ENCODE measurements at regions of chr4 and their contacts with region 1.

Region 1: GRCh38 chr4:38663801-38664705 is at the start of gene KLF3:
- DNase-seq: no peak
- ATAC-seq: peak; percentile 82
- H3K4me3 Mint-ChIP-seq: peak within 1 kb of the TSS; percentile 84
- H3K27ac Mint-ChIP-seq: peak within 1 kb of the TSS; percentile 88
- H3K4me1 Mint-ChIP-seq: peaks cover 67% of the 10 kb centered on the region
- H3K27me3 Mint-ChIP-seq: no peaks in the 10 kb centered on the region
- CTCF ChIP-seq: no peak
- total RNA-seq, gene KLF3: 14.5 and 15.9 TPM in 2 replicates

Region 2: DNA sequence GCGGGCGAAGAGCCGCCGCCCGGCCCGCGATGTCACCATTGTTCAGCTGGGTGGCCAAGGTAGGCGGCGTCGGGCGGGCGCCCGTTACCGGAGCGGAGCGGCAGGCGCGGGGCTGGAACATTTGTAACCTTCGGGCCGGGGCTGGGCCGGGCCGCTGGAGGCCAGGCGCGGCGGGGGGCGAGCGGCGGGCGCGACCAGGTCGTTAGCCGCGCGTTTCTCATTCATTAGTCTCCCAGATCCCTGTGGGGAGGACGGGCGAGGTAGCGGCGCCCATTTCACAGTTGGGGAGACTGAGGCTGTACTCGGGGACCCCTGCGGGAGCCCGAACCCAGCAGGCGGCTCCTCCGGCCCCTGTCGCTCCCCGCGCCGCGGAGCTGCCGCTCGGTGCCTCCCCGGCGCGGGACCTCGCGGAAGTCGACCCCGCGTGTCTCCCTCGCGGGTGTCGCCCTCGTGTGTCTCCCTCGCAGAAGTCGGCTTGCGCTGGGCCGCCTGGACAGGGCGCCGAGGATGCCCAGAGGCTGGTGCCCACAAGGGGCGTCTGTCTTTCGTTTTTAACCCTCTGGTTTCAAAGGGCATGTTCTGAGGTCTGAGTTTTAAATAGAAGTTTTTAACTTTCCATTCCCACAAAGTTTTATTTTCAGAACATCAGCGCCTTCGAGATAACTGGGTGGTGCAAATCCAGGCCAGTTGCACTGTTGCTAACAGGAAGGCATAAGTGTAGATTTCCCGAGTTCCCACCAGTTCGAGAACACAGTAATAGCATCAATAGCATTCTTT is 686.4 kb before region 1 on chr4:
- CTCF ChIA-PET with region 1: no interaction called
- POLR2A ChIA-PET with region 1: no interaction called
- intact Hi-C with region 1: loop called (anchors 5 kb)
- DNase-seq: peak; percentile 62
- ATAC-seq: peak; percentile 73
- H3K4me3 Mint-ChIP-seq: peak overlapping the region; percentile 86
- H3K27ac Mint-ChIP-seq: peak overlapping the region; percentile 82
- H3K4me1 Mint-ChIP-seq: peaks cover 57% of the 10 kb centered on the region
- H3K27me3 Mint-ChIP-seq: no peaks in the 10 kb centered on the region
- CTCF ChIP-seq: no peak

Region 3: DNA sequence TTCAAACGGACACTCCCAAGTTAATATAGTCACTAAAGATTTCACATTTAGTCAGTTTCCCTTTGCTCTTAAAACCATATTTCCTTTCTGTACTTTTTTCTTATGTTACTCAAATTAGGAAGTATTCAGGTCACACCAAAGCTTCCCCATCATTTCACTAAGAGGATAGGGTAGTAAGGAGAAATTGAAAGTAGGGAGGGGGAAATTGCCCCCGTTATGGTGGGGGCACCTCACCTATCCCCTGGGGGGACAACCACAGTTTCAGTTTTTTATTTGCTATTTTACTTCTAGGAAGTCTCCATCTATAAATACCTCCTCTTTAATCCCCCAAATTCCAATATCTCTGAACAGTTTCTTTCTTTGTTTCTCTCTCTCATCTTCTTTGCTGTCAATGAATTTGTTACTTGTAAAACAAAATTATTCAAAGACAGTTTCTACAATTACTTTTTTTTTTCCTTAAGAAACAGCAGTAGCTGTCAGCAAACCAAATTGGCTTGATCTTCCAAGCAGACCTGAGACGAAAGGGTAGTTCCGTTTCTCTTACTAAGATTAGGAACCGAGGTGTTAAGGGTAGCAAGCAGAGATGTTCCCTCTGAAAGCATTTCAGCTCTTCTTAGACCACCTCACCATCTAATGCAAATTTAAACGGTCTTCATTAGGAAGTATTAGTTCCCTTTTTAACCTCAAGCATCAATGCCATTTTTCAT is 160.2 kb before region 1 on chr4:
- CTCF ChIA-PET with region 1: no interaction called
- POLR2A ChIA-PET with region 1: interaction called, 5 read pairs
- intact Hi-C with region 1: loop called (anchors 2 kb)
- DNase-seq: no peak
- ATAC-seq: peak; percentile 90
- H3K4me3 Mint-ChIP-seq: peak overlapping the region; percentile 66
- H3K27ac Mint-ChIP-seq: peak overlapping the region; percentile 74
- H3K4me1 Mint-ChIP-seq: peaks cover 32% of the 10 kb centered on the region
- H3K27me3 Mint-ChIP-seq: peaks cover 27% of the 10 kb centered on the region
- CTCF ChIP-seq: no peak

Region 4: DNA sequence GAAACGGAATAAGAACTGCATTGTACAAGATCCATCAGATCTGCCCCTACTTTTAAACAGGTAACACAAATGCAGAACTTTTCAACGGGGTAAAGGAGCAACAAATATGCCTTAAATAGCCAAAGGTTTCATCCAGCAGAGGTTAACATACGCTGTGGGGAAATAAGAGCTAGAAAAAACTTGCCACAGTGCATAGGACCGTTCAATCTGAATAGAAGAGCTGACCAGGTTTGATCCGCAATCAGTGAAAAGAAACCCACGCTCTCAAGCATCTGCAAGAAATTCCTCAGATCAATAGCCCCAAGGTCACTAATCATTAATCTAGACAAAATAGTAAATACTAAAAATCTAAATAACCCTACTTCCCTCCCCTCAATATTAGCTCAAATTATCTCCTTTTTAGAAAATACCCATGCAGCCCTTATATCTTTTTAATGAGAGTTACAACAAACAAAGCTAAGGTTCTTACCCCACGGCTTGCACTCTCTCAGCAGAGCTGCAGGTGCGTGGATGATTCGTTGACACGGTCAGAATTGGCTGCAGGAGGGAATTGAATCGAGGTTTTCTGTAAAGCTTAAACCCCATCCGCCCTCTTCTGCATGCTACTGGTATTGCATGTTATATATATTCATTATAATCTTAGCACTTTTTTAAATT is 118.5 kb after region 1 on chr4 and contains the start of gene TLR10:
- CTCF ChIA-PET with region 1: no interaction called
- POLR2A ChIA-PET with region 1: interaction called, 4 read pairs
- intact Hi-C with region 1: loop called (anchors 5 kb)
- DNase-seq: no peak
- ATAC-seq: peak; percentile 80
- H3K4me3 Mint-ChIP-seq: peak within 1 kb of the TSS; percentile 100
- H3K27ac Mint-ChIP-seq: peak within 1 kb of the TSS; percentile 98
- H3K4me1 Mint-ChIP-seq: peaks cover 64% of the 10 kb centered on the region
- H3K27me3 Mint-ChIP-seq: no peaks in the 10 kb centered on the region
- CTCF ChIP-seq: no peak
- total RNA-seq, gene TLR10: 92.0 and 107 TPM in 2 replicates

Region 5: DNA sequence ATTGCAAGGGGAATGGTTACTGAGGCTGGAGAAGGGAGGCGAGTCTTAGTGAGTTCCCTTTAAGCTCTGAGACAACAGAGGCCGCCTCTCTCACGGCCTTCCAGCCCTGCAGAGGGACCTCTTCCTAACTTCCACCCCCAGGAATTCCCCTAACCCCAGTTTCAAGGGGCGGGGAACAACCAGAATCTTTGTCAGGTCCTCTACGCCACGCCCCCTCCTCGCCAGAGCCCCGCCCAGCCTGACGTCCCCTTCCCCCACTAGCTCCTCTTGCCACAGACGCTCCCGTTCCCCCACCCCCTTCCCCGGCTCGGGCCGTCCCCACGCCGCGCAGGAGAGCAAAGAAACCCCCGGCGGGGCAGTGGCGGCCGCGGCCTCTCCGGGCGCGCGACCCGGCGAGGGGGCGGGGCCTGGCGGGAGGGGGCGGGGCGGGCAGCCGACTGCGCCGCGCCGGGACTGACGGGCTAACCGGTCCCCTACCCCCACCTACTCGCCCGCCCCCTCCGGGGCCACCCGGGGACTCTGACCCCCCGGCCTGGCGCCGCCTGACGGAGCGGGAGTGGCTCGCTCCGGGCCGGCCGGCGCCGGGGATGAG is 380.4 kb after region 1 on chr4:
- CTCF ChIA-PET with region 1: no interaction called
- POLR2A ChIA-PET with region 1: no interaction called
- intact Hi-C with region 1: loop called (anchors 5 kb)
- DNase-seq: peak; percentile 96
- ATAC-seq: peak; percentile 86
- H3K4me3 Mint-ChIP-seq: peak overlapping the region; percentile 86
- H3K27ac Mint-ChIP-seq: peak overlapping the region; percentile 88
- H3K4me1 Mint-ChIP-seq: peaks cover 62% of the 10 kb centered on the region
- H3K27me3 Mint-ChIP-seq: no peaks in the 10 kb centered on the region
- CTCF ChIP-seq: no peak